ENCODE measurements at regions of chr7 and their contacts with region 1.

Region 1: GRCh38 chr7:29228289-29229011 is 33.9 kb downstream of the CHN2 start:
- DNase-seq: peak; percentile 92
- ATAC-seq: peak; percentile 79
- H3K4me3 ChIP-seq: peak overlapping the region in 1 of 3 experiments; percentile 36; a peak in 2 of 6 replicates
- H3K27ac ChIP-seq: peak overlapping the region; percentile 79
- H3K4me1 ChIP-seq: peaks cover 80% of the 10 kb centered on the region
- H3K27me3 ChIP-seq: no peaks in the 10 kb centered on the region
- CTCF ChIP-seq: no peak
- EP300 ChIP-seq: peak; percentile 89 to 94
- POLR2A ChIP-seq: no peak
- RAD21 ChIP-seq: peak; percentile 41; the same call in 1 of the 2 replicates

Region 2: GRCh38 chr7:29146888-29147609 is 81.4 kb before region 1 on chr7:
- CTCF ChIA-PET with region 1: no interaction called
- POLR2A ChIA-PET with region 1: no interaction called
- in situ Hi-C with region 1: no loop called
- intact Hi-C with region 1: no loop called
- DNase-seq: peak; percentile 60
- ATAC-seq: peak; percentile 72
- H3K4me3 ChIP-seq: peak overlapping the region; percentile 75 to 85 (median 78); a peak in 5 of 6 replicates
- H3K27ac ChIP-seq: peak overlapping the region; percentile 68
- H3K4me1 ChIP-seq: peaks cover 57% of the 10 kb centered on the region
- H3K27me3 ChIP-seq: no peaks in the 10 kb centered on the region; a peak in 1 of 5 replicates
- CTCF ChIP-seq: no peak
- EP300 ChIP-seq: no peak
- POLR2A ChIP-seq: no peak
- RAD21 ChIP-seq: no peak

Region 3: GRCh38 chr7:29194594-29195427 is 33.6 kb before region 1 on chr7 and contains the start of gene CHN2:
- CTCF ChIA-PET with region 1: no interaction called
- POLR2A ChIA-PET with region 1: interaction called, 28 read pairs
- in situ Hi-C with region 1: no loop called
- intact Hi-C with region 1: loop called (anchors 5 kb)
- DNase-seq: peak; percentile 73
- ATAC-seq: peak; percentile 78
- H3K4me3 ChIP-seq: peak within 1 kb of the TSS; percentile 92 to 98 (median 98)
- H3K27ac ChIP-seq: peak within 1 kb of the TSS; percentile 88
- H3K4me1 ChIP-seq: peaks cover 80% of the 10 kb centered on the region
- H3K27me3 ChIP-seq: no peaks in the 10 kb centered on the region; a peak in 1 of 5 replicates
- CTCF ChIP-seq: peak; percentile 40; the same call in 1 of the 2 replicates
- EP300 ChIP-seq: no peak
- POLR2A ChIP-seq: peak in 1 of 2 experiments; percentile 75; a peak in 2 of 4 replicates
- RAD21 ChIP-seq: no peak; the same call in none of the 2 replicates
- total RNA-seq, gene CHN2: 23.5 and 28.6 TPM in 2 replicates

Region 4: DNA sequence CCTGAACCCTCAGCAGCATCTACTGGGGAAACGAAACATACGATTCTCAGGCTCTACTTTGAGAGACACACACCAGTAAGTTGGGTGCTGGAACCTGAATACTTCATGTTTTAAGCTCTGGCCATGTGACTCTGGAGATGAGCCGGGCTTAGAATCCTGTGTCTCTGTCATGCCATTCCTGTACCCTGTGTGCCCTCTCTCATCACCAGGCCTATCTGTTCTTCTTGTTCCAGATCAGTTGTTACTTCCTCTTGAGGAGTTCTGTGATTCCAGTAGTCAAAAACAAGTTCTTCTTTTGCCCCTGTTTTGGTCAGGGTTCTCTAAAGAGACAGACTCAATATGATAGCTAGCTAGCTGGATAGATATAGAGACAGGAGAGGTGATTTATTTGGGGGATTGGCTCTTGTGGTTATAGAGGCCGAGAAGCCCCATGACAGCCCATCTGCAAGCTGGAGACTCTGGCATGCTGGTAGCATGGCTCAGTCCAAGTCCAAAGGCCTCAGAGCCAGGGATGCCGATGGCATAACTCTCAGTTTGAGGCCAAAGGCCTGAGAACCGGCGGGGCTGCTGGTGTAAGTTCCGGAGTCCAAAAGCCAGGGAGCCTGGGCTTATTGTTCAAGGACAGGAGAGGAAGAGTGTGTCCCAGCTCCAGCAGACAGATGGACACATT is 20.4 kb after region 1 on chr7:
- CTCF ChIA-PET with region 1: no interaction called
- POLR2A ChIA-PET with region 1: interaction called, 11 read pairs
- in situ Hi-C with region 1: no loop called
- intact Hi-C with region 1: no loop called
- DNase-seq: peak; percentile 88
- ATAC-seq: peak; percentile 95
- H3K4me3 ChIP-seq: no peak overlapping the region
- H3K27ac ChIP-seq: peak overlapping the region; percentile 66
- H3K4me1 ChIP-seq: peaks cover 53% of the 10 kb centered on the region
- H3K27me3 ChIP-seq: no peaks in the 10 kb centered on the region
- CTCF ChIP-seq: no peak
- EP300 ChIP-seq: peak in 1 of 2 experiments; percentile 86; a peak in 2 of 4 replicates
- POLR2A ChIP-seq: no peak
- RAD21 ChIP-seq: peak; percentile 44; the same call in 1 of the 2 replicates

Region 5: DNA sequence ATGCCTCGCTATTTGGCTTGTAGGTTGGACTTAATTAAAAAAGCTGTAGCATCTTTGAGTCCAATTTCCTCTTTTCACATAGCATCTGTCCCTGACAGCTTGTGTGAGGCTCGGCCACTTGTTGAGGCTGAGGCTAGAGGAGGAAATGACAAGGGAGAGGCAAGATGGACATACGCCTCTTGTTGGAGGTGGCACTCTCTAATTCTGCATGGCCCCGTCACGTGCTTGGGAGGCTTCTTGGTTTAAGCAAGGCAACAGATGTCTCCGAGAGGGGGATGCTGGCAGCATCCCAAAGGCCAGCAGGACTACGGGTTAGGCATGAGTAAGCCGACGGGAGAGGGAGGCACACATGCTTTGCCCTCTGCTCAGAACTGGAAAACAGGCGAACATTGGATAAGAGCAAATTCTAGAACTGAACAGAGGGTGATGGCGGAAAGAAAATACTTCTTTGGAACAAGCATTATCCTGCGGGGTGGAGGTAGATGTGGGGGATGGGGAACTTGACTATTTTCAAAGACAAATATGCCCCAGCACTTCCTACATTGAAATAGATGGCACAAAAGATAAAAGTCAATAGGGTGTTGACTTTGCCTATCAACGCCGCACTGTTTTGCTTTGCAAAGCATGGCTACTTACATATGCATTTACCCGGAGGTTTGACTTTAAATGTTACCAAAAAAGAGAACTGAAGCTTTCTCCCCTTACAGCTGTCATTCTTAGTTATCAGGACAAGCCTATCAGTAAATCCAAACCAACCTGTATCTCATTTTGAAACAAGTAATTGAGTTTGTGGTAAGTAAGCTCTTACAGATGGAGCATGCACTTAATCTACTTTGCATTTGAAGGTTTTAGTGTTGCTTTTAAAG is 60.9 kb after region 1 on chr7:
- CTCF ChIA-PET with region 1: no interaction called
- POLR2A ChIA-PET with region 1: interaction called, 7 read pairs
- in situ Hi-C with region 1: no loop called
- intact Hi-C with region 1: loop called (anchors 5 kb)
- DNase-seq: peak; percentile 63
- ATAC-seq: peak; percentile 23; the same call in 2 of the 3 replicates
- H3K4me3 ChIP-seq: no peak overlapping the region; a peak in 1 of 6 replicates
- H3K27ac ChIP-seq: peak overlapping the region; percentile 84
- H3K4me1 ChIP-seq: peaks cover 86% of the 10 kb centered on the region
- H3K27me3 ChIP-seq: no peaks in the 10 kb centered on the region
- CTCF ChIP-seq: no peak
- EP300 ChIP-seq: peak in 1 of 2 experiments; percentile 67; a peak in 2 of 4 replicates
- POLR2A ChIP-seq: no peak
- RAD21 ChIP-seq: no peak